ENCODE measurements at regions of chr12 and their contacts with region 1.

Region 1: GRCh38 chr12:71780237-71780822 is 25.7 kb downstream of the RAB21 start:
- DNase-seq: no peak
- ATAC-seq: peak; percentile 82
- H3K4me3 ChIP-seq: no peak overlapping the region
- H3K27ac ChIP-seq: no peak overlapping the region
- H3K4me1 ChIP-seq: no peaks in the 10 kb centered on the region
- H3K27me3 ChIP-seq: no peaks in the 10 kb centered on the region
- CTCF ChIP-seq: peak; percentile 55 to 69 (median 58)
- EP300 ChIP-seq: no peak
- POLR2A ChIP-seq: no peak
- RAD21 ChIP-seq: peak; percentile 76

Region 2: GRCh38 chr12:71760471-71760870 is 19.9 kb before region 1 on chr12:
- CTCF ChIA-PET with region 1: interaction called, 9 read pairs
- POLR2A ChIA-PET with region 1: interaction called, 4 read pairs
- RAD21 ChIA-PET with region 1: interaction called, 3 read pairs
- SMC1A ChIA-PET with region 1: interaction called, 10 read pairs
- in situ Hi-C with region 1: no loop called
- intact Hi-C with region 1: no loop called
- DNase-seq: no peak
- ATAC-seq: no peak; the same call in 2 of the 3 replicates
- H3K4me3 ChIP-seq: no peak overlapping the region
- H3K27ac ChIP-seq: no peak overlapping the region
- H3K4me1 ChIP-seq: no peaks in the 10 kb centered on the region
- H3K27me3 ChIP-seq: no peaks in the 10 kb centered on the region
- CTCF ChIP-seq: no peak
- EP300 ChIP-seq: no peak
- POLR2A ChIP-seq: no peak
- RAD21 ChIP-seq: no peak

Region 3: DNA sequence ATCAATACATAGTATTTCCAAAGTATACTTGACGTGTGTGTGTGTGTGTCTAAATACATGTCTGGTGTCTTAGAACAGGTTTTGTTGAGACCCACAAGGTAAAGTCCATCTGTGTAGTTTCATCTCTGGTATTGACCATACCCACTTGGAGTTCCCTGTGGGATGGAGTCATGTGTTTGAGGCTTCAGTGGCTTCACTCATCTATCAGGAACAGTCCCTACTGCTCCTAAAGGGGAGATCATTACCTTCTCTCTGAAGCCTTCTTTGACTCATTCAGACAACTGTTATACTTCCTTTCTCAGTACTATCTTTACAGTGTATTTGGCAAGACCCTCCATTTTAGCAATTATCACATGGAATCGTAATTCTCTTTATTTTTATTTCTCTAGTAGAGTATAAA is 11.4 kb before region 1 on chr12:
- CTCF ChIA-PET with region 1: interaction called, 26 read pairs
- POLR2A ChIA-PET with region 1: interaction called, 4 read pairs
- RAD21 ChIA-PET with region 1: no interaction called
- SMC1A ChIA-PET with region 1: interaction called, 10 read pairs
- in situ Hi-C with region 1: no loop called
- intact Hi-C with region 1: no loop called
- DNase-seq: no peak
- ATAC-seq: peak; percentile 64
- H3K4me3 ChIP-seq: no peak overlapping the region
- H3K27ac ChIP-seq: no peak overlapping the region
- H3K4me1 ChIP-seq: no peaks in the 10 kb centered on the region
- H3K27me3 ChIP-seq: no peaks in the 10 kb centered on the region
- CTCF ChIP-seq: no peak
- EP300 ChIP-seq: no peak
- POLR2A ChIP-seq: no peak
- RAD21 ChIP-seq: no peak

Region 4: DNA sequence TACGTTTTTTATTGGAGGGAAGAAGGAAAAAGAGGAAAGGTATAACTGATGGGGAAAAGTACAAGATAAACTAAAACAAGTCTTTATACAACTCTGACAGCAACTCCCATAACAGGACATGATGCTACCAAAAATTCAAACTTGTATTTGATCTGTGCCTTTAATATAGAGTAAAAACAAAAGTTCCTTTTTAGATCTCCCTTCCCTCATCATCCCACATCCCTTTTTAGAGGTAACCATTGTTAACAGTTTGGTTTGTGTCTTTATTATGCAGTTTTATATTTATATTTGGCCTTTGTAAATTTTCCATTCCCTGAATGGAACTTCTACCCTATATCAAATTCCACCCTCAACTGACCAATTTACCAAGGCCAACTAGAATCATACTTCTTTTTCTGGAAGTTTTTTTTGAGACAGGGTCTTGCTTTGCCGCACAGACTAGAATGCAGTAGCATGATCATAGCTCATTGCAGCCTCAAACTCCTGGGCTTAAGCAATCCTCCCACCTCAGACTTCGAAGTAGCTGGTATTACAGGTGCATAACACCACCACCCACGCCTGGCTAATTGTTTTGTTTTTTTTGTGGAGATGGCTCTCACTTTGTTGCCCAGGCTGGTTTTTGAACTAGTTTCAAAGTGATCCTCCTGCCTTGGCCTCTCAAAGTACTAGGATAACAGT is 11.3 kb after region 1 on chr12:
- CTCF ChIA-PET with region 1: interaction called, 14 read pairs
- POLR2A ChIA-PET with region 1: no interaction called
- RAD21 ChIA-PET with region 1: interaction called, 4 read pairs
- SMC1A ChIA-PET with region 1: interaction called, 10 read pairs
- in situ Hi-C with region 1: no loop called
- intact Hi-C with region 1: no loop called
- DNase-seq: no peak
- ATAC-seq: no peak
- H3K4me3 ChIP-seq: no peak overlapping the region
- H3K27ac ChIP-seq: no peak overlapping the region
- H3K4me1 ChIP-seq: no peaks in the 10 kb centered on the region
- H3K27me3 ChIP-seq: no peaks in the 10 kb centered on the region
- CTCF ChIP-seq: no peak
- EP300 ChIP-seq: no peak
- POLR2A ChIP-seq: no peak
- RAD21 ChIP-seq: no peak

Region 5: GRCh38 chr12:71840231-71840847 is 60.0 kb after region 1 on chr12:
- CTCF ChIA-PET with region 1: interaction called, 23 read pairs
- POLR2A ChIA-PET with region 1: no interaction called
- RAD21 ChIA-PET with region 1: interaction called, 15 read pairs
- SMC1A ChIA-PET with region 1: interaction called, 24 read pairs
- in situ Hi-C with region 1: no loop called
- intact Hi-C with region 1: loop called (anchors 2 kb)
- DNase-seq: no peak
- ATAC-seq: peak; percentile 34
- H3K4me3 ChIP-seq: peak overlapping the region; percentile 86
- H3K27ac ChIP-seq: peak overlapping the region; percentile 81
- H3K4me1 ChIP-seq: peaks cover 10% of the 10 kb centered on the region; the same call in 1 of the 2 replicates
- H3K27me3 ChIP-seq: no peaks in the 10 kb centered on the region
- CTCF ChIP-seq: no peak
- EP300 ChIP-seq: no peak
- POLR2A ChIP-seq: no peak
- RAD21 ChIP-seq: no peak

Region 6: DNA sequence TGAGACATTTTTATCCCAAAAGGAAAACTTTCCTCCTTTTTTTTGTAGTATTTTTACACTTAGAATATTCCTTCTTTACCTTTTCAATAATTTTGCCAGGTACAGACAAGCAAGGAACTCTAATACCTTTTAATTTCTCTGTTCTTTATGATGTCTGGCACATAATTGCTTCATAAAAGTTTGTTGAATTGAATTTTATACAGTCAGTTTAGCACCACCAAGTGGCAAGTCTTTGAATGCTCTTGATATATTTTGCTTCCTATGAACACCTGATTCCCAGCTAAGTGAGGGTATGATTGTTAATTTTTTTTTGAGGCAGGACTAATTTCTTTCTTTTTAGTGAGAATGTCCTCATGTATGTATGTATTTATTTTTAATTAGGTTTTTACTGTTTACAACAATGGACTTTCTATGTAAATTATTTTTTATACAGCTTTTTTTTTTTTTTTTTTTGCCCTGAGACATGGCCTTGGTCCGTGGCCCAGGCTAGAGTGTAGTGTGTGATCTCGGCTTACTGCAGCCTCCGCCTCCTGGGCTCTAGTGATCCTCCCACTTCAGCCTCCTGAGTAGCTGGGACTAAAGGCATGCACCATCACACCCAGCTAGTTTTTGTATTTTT is 66.1 kb after region 1 on chr12:
- CTCF ChIA-PET with region 1: interaction called, 48 read pairs
- POLR2A ChIA-PET with region 1: interaction called, 4 read pairs
- RAD21 ChIA-PET with region 1: interaction called, 15 read pairs
- SMC1A ChIA-PET with region 1: interaction called, 24 read pairs
- in situ Hi-C with region 1: no loop called
- intact Hi-C with region 1: loop called (anchors 2 kb)
- DNase-seq: no peak
- ATAC-seq: peak; percentile 60
- H3K4me3 ChIP-seq: no peak overlapping the region
- H3K27ac ChIP-seq: no peak overlapping the region
- H3K4me1 ChIP-seq: peaks cover 4% of the 10 kb centered on the region; the same call in 1 of the 2 replicates
- H3K27me3 ChIP-seq: no peaks in the 10 kb centered on the region
- CTCF ChIP-seq: peak; percentile 45 to 50 (median 47); a peak in 5 of 6 replicates
- EP300 ChIP-seq: no peak
- POLR2A ChIP-seq: no peak
- RAD21 ChIP-seq: peak; percentile 31; the same call in 1 of the 2 replicates

Region 7: GRCh38 chr12:71938728-71939385 is 158.5 kb after region 1 on chr12 and contains the start of gene TPH2:
- CTCF ChIA-PET with region 1: interaction called, 22 read pairs
- POLR2A ChIA-PET with region 1: no interaction called
- RAD21 ChIA-PET with region 1: interaction called, 3 read pairs
- SMC1A ChIA-PET with region 1: interaction called, 6 read pairs
- in situ Hi-C with region 1: loop called (anchors 5 kb)
- intact Hi-C with region 1: loop called (anchors 1 kb)
- DNase-seq: no peak
- ATAC-seq: peak; percentile 64
- H3K4me3 ChIP-seq: no peak within 1 kb of the TSS
- H3K27ac ChIP-seq: no peak within 1 kb of the TSS
- H3K4me1 ChIP-seq: no peaks in the 10 kb centered on the region
- H3K27me3 ChIP-seq: no peaks in the 10 kb centered on the region
- CTCF ChIP-seq: peak; percentile 43 to 51 (median 47)
- EP300 ChIP-seq: no peak
- POLR2A ChIP-seq: no peak
- RAD21 ChIP-seq: peak; percentile 72
- polyA plus RNA-seq, gene TPH2: not detected

Measured in GM12878 (cell line).